Activated CD4-positive, alpha-beta T cell treated with anti-CD3 and anti-CD28 coated beads for 36 hours (primary cell): ENCODE measurements at regions of chr11 and their contacts with region 1.

Region 1: DNA sequence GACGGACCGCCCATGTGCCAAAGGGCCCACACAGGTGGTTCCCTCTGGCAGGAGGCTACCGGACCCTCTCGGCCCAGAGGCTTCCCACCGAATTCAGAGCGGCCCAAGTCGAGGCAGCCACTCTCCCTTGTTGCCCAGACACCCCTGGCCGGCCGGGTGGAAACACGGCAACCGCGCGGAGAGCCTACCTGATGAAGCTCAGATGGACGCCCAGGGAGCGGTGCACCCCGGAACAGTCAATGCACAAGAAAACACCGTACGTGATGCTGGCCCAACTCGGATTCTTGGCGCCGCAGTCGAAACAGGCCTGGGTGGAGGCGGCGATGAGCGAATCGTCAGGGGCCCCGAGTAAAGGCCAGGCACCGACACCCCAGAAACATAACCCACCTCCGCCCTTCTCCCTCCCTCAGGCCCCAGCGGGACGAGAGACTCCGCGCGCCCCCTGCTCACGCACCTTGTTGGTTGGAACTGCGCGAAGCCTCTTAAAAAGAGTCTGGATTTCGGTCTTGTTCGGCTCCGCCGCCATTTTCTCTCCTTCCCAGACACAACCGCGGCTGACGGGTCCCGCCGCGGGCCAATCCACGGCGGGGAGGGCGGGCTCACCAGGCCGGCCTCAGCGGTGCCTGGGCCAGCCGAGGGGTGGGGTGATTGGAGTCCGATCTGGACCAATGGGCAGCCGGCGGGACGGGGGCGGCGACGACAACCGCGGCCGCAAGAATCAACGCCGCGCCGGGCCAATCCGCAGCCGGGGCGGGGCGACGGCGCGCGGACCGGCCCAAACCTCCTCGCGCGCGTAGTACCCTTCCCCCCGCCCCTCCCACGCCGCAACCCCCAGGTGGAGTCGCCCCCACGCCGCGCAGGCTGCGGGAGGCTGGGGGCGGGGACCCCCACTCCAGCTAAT is at the start of gene ARFGAP2:
- DNase-seq: peak; percentile 98
- ATAC-seq: peak; percentile 95
- H3K4me3 Mint-ChIP-seq: peak within 1 kb of the TSS; percentile 96
- H3K27ac Mint-ChIP-seq: peak within 1 kb of the TSS; percentile 98
- H3K4me1 Mint-ChIP-seq: peaks cover 34% of the 10 kb centered on the region
- H3K27me3 Mint-ChIP-seq: no peaks in the 10 kb centered on the region
- total RNA-seq, gene ARFGAP2: 74.9 to 76.5 TPM

Region 2: GRCh38 chr11:45917623-45918330 is 1258.8 kb before region 1 on chr11 and contains the start of gene PEX16:
- CTCF ChIA-PET with region 1: no interaction called
- POLR2A ChIA-PET with region 1: no interaction called
- intact Hi-C with region 1: loop called in 1 of 2 experiments (anchors 5 kb)
- DNase-seq: peak; percentile 97
- ATAC-seq: peak; percentile 94
- H3K4me3 Mint-ChIP-seq: peak within 1 kb of the TSS; percentile 96
- H3K27ac Mint-ChIP-seq: peak within 1 kb of the TSS; percentile 95
- H3K4me1 Mint-ChIP-seq: peaks cover 31% of the 10 kb centered on the region
- H3K27me3 Mint-ChIP-seq: peaks cover 3% of the 10 kb centered on the region
- total RNA-seq, gene PEX16: 28.1 to 33.4 TPM

Region 3: GRCh38 chr11:47248664-47249377 is 72.2 kb after region 1 on chr11 and contains the start of gene ACP2:
- CTCF ChIA-PET with region 1: interaction called, 5 read pairs
- POLR2A ChIA-PET with region 1: interaction called, 4 read pairs
- intact Hi-C with region 1: loop called (anchors 1 to 2 kb)
- DNase-seq: peak; percentile 94
- ATAC-seq: peak; percentile 97
- H3K4me3 Mint-ChIP-seq: peak within 1 kb of the TSS; percentile 78
- H3K27ac Mint-ChIP-seq: peak within 1 kb of the TSS; percentile 95
- H3K4me1 Mint-ChIP-seq: peaks cover 22% of the 10 kb centered on the region
- H3K27me3 Mint-ChIP-seq: no peaks in the 10 kb centered on the region
- total RNA-seq, gene ACP2: 10.2 to 11.2 TPM

Region 4: GRCh38 chr11:47355283-47356128 is 178.9 kb after region 1 on chr11:
- CTCF ChIA-PET with region 1: no interaction called
- POLR2A ChIA-PET with region 1: no interaction called
- intact Hi-C with region 1: loop called in 1 of 2 experiments (anchors 2 kb)
- DNase-seq: peak; percentile 80
- ATAC-seq: peak; percentile 39
- H3K4me3 Mint-ChIP-seq: no peak overlapping the region
- H3K27ac Mint-ChIP-seq: no peak overlapping the region
- H3K4me1 Mint-ChIP-seq: peaks cover 12% of the 10 kb centered on the region
- H3K27me3 Mint-ChIP-seq: no peaks in the 10 kb centered on the region

Region 5: GRCh38 chr11:47514825-47515647 is 338.5 kb after region 1 on chr11:
- CTCF ChIA-PET with region 1: no interaction called
- POLR2A ChIA-PET with region 1: no interaction called
- intact Hi-C with region 1: no loop called
- DNase-seq: peak; percentile 69
- ATAC-seq: peak; percentile 95
- H3K4me3 Mint-ChIP-seq: peak overlapping the region; percentile 0
- H3K27ac Mint-ChIP-seq: peak overlapping the region; percentile 84
- H3K4me1 Mint-ChIP-seq: peaks cover 89% of the 10 kb centered on the region
- H3K27me3 Mint-ChIP-seq: no peaks in the 10 kb centered on the region

Region 6: GRCh38 chr11:47552566-47553416 is 376.2 kb after region 1 on chr11 and contains the start of gene CELF1:
- CTCF ChIA-PET with region 1: no interaction called
- POLR2A ChIA-PET with region 1: no interaction called
- intact Hi-C with region 1: loop called in 1 of 2 experiments (anchors 1 kb)
- DNase-seq: peak; percentile 97
- ATAC-seq: peak; percentile 94
- H3K4me3 Mint-ChIP-seq: peak within 1 kb of the TSS; percentile 96
- H3K27ac Mint-ChIP-seq: peak within 1 kb of the TSS; percentile 94
- H3K4me1 Mint-ChIP-seq: peaks cover 38% of the 10 kb centered on the region
- H3K27me3 Mint-ChIP-seq: no peaks in the 10 kb centered on the region
- total RNA-seq, gene CELF1: 132 to 143 TPM

Region 7: DNA sequence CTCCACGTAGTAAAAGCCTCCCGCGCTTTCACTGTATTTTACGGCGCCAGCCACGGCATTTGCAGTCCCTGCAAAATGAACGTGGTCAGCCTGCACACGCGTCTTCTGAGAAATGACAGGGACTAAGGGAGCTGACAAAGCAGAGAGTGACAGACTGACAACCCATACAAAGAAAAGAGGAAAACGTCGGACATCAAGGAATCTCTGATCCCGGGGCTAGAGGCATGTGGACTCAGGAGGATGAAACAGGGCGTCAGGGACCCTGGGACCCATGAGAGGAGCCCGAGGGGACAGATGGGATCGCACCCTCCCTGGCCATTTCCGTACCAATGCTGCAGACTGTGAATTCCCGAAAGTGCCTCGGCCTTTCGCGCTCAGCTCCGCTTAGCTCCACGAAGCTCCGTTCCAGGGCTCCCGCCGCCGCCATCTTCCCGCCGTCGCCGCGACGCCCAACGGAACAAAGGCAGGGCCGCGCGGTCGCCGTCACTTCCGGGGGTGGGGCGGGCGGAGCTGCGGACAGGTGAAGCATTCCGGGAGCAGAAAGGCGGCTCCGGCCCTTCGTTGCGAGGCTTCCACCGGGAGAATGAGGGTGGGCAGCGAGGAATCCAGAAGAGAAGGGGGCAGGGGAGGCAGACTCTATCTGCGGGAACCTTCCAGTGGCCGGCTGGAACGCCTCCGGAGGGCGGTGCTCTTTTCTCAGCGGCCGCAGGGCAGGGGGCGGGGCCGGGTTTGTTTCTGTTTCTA is 671.5 kb after region 1 on chr11 and contains the start of gene NUP160:
- CTCF ChIA-PET with region 1: no interaction called
- POLR2A ChIA-PET with region 1: no interaction called
- intact Hi-C with region 1: loop called in 1 of 2 experiments (anchors 1 kb)
- DNase-seq: peak; percentile 94
- ATAC-seq: peak; percentile 88
- H3K4me3 Mint-ChIP-seq: peak within 1 kb of the TSS; percentile 90
- H3K27ac Mint-ChIP-seq: peak within 1 kb of the TSS; percentile 99
- H3K4me1 Mint-ChIP-seq: peaks cover 44% of the 10 kb centered on the region
- H3K27me3 Mint-ChIP-seq: no peaks in the 10 kb centered on the region
- total RNA-seq, gene NUP160: 67.1 to 84.5 TPM

Region 8: GRCh38 chr11:48150213-48150612 is 973.6 kb after region 1 on chr11:
- CTCF ChIA-PET with region 1: no interaction called
- POLR2A ChIA-PET with region 1: no interaction called
- intact Hi-C with region 1: no loop called
- DNase-seq: no peak
- ATAC-seq: no peak
- H3K4me3 Mint-ChIP-seq: no peak overlapping the region
- H3K27ac Mint-ChIP-seq: no peak overlapping the region
- H3K4me1 Mint-ChIP-seq: peaks cover 2% of the 10 kb centered on the region
- H3K27me3 Mint-ChIP-seq: no peaks in the 10 kb centered on the region